ENCODE measurements at regions of chr2 and their contacts with region 1.

Region 1: DNA sequence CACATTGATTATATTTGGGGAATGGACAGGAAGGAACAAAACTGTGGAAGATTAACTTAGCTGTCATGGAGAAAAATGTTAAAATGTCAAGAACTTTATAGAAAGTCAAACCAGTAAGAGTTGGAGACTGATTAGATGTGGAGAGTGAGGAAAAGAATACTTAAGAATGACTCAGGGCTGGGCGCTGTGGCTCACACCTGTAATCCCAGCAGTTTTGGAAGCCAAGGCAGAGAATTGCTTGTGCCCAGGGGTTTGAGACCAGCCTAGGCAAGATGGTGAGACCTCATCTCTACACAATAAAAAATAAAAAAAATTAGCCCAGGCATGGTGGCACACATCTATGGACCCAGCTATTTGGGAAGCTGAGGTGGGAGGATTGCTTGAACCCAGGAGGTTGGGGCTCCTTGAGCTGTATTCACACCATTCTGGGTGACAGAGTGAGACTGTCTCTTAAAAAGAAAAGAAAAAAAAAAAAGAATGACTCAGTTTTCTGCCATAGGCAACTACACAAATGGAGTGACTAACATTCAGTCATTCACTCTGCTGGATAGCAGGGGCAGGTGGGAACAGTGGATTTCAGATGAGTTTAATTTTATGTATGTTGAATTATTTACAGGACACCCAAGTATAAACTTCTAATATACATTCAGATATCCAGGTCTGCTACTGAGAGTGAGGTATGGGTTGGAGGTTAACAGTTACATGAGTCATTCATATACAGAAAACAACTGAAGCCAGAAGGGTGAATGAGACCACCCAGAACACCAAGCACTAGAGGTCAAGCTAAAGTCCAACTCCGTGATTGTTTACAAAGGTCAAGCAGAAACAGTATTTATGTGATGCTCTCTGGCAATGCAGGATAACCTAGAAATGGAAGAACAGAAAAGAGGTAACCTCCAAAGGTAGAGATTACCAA is 33.9 kb downstream of the ORC2 start:
- DNase-seq: peak; percentile 10
- H3K4me3 Mint-ChIP-seq: no peak overlapping the region
- H3K27ac Mint-ChIP-seq: peak overlapping the region; percentile 27
- H3K4me1 Mint-ChIP-seq: peaks cover 21% of the 10 kb centered on the region
- H3K27me3 Mint-ChIP-seq: no peaks in the 10 kb centered on the region

Region 2: DNA sequence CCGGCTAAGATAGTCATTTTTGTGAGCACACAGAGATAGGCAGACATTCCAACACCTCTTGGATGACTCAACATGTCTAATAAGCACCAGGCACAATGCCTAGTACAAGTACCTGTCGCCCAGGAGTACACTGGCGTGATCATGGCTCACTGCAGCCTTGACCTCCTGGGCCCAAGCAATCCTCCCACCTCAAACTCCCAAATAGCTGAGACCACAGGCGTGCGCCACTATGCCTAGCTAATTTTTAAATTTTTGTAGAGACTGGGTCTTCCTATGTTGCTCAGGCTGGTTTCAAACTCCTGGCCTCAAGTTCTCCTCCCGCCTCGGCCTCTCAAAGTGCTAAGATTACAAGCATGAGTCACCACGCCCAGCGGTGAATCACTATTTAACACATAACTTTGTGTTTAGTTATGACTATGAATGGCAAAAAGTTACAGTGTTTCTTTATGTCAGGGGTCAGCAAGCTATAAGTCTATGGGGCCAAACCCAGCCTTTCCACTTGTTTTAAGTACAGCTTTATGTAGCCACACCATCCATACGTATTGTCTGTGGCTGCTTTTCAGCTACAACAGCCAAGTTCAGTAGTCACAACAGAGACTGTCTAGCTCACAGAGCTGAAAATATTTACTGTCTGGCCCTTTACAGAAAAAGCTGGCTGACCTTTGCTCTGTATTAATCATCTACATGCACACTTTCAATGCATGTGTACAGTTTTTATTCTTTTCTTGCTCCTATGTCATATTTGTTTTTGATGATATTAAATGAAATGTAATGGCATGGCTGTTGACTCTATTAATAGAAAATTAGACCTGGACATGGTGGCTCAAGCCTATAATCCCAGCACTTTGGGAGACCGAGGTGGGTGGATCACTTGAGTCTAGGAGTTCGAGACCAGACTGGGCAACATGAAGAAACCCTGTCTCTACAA is 15.1 kb after region 1 on chr2:
- CTCF ChIA-PET with region 1: interaction called, 4 read pairs
- intact Hi-C with region 1: loop called (anchors 2 kb)
- DNase-seq: peak; percentile 86
- H3K4me3 Mint-ChIP-seq: no peak overlapping the region
- H3K27ac Mint-ChIP-seq: peak overlapping the region; percentile 63
- H3K4me1 Mint-ChIP-seq: peaks cover 24% of the 10 kb centered on the region
- H3K27me3 Mint-ChIP-seq: no peaks in the 10 kb centered on the region

Region 3: GRCh38 chr2:201021914-201022313 is 92.3 kb after region 1 on chr2:
- CTCF ChIA-PET with region 1: no interaction called
- intact Hi-C with region 1: no loop called
- DNase-seq: no peak
- H3K4me3 Mint-ChIP-seq: no peak overlapping the region
- H3K27ac Mint-ChIP-seq: no peak overlapping the region
- H3K4me1 Mint-ChIP-seq: peaks cover 16% of the 10 kb centered on the region
- H3K27me3 Mint-ChIP-seq: no peaks in the 10 kb centered on the region

Measured in activated naive CD4-positive, alpha-beta T cell treated with anti-CD3 and anti-CD28 coated beads for 36 hours (primary cell).